PC-3 (cell line): ENCODE measurements at regions of chr3 and their contacts with region 1.

Region 1: DNA sequence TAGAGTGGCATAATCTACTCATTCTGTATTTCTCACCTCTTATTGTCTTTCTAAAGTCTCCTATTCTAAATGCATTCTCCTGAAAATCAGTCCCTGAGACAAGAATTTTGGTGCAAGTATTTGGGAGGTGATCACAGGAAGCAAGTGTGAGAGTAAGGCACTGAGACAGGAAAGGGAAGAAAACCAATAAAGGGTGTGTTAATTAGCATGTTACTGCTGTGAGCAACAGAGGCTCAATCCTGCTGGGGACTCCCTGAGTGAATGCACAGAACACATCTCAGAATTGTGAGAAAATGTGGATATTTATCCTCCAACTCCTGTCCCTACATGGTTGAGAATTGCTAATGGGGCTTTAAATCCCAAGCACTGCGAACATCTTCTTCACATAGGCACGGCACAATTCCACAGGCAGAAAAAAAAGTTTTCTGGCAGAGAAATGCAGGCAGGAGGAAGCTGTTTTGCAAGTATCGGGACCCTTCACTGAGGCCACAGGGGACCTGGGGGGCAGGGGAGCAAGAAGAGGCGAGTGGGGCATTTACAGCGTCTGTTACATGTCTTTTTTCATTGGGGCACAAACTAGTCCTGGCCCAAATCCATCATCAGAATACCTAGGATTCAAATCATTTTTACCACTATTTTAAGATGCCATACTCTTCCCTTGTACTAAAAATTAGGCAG is 27.2 kb upstream of the STT3B start:
- DNase-seq: no peak
- ATAC-seq: no peak
- H3K4me3 ChIP-seq: no peak overlapping the region
- H3K27ac ChIP-seq: no peak overlapping the region
- H3K4me1 ChIP-seq: no peaks in the 10 kb centered on the region
- H3K27me3 ChIP-seq: peaks cover 8% of the 10 kb centered on the region; the same call in 1 of the 2 replicates
- CTCF ChIP-seq: no peak

Region 2: GRCh38 chr3:31377045-31377642 is 128.4 kb before region 1 on chr3:
- CTCF ChIA-PET with region 1: no interaction called
- POLR2A ChIA-PET with region 1: no interaction called
- intact Hi-C with region 1: loop called (anchors 10 kb)
- DNase-seq: peak; percentile 98
- ATAC-seq: peak; percentile 99
- H3K4me3 ChIP-seq: no peak overlapping the region
- H3K27ac ChIP-seq: peak overlapping the region; percentile 44
- H3K4me1 ChIP-seq: peaks cover 19% of the 10 kb centered on the region
- H3K27me3 ChIP-seq: no peaks in the 10 kb centered on the region
- CTCF ChIP-seq: no peak

Region 3: GRCh38 chr3:31531992-31532586 is 26.6 kb after region 1 on chr3:
- CTCF ChIA-PET with region 1: no interaction called
- POLR2A ChIA-PET with region 1: no interaction called
- intact Hi-C with region 1: no loop called
- DNase-seq: peak; percentile 99
- ATAC-seq: peak; percentile 87
- H3K4me3 ChIP-seq: peak overlapping the region; percentile 98
- H3K27ac ChIP-seq: peak overlapping the region; percentile 96
- H3K4me1 ChIP-seq: peaks cover 28% of the 10 kb centered on the region
- H3K27me3 ChIP-seq: no peaks in the 10 kb centered on the region
- CTCF ChIP-seq: no peak